ENCODE measurements at regions of chr15 and their contacts with region 1.

Region 1: GRCh38 chr15:52078876-52079700 is 33.5 kb downstream of the BCL2L10 start:
- DNase-seq: no peak
- ATAC-seq: peak; percentile 63
- H3K4me3 ChIP-seq: no peak overlapping the region
- H3K27ac ChIP-seq: peak overlapping the region; percentile 4; the same call in 1 of the 2 replicates
- H3K4me1 ChIP-seq: peaks cover 32% of the 10 kb centered on the region
- H3K27me3 ChIP-seq: no peaks in the 10 kb centered on the region
- CTCF ChIP-seq: peak; percentile 81 to 90 (median 88)
- EP300 ChIP-seq: no peak
- POLR2A ChIP-seq: no peak
- RAD21 ChIP-seq: peak; percentile 87

Region 2: GRCh38 chr15:51982013-51982769 is 96.9 kb before region 1 on chr15:
- CTCF ChIA-PET with region 1: interaction called, 49 read pairs
- POLR2A ChIA-PET with region 1: interaction called, 3 read pairs
- RAD21 ChIA-PET with region 1: interaction called, 18 read pairs
- SMC1A ChIA-PET with region 1: interaction called, 56 read pairs
- in situ Hi-C with region 1: no loop called
- intact Hi-C with region 1: loop called (anchors 1 kb)
- DNase-seq: peak; percentile 92
- ATAC-seq: peak; percentile 99
- H3K4me3 ChIP-seq: peak overlapping the region; percentile 61
- H3K27ac ChIP-seq: peak overlapping the region; percentile 73
- H3K4me1 ChIP-seq: no peaks in the 10 kb centered on the region
- H3K27me3 ChIP-seq: no peaks in the 10 kb centered on the region
- CTCF ChIP-seq: peak; percentile 60 to 88 (median 80)
- EP300 ChIP-seq: no peak
- POLR2A ChIP-seq: peak; percentile 69
- RAD21 ChIP-seq: peak; percentile 96

Region 3: GRCh38 chr15:52018693-52019387 is 60.2 kb before region 1 on chr15 and contains the start of gene MAPK6:
- CTCF ChIA-PET with region 1: interaction called, 12 read pairs
- POLR2A ChIA-PET with region 1: interaction called, 5 read pairs
- RAD21 ChIA-PET with region 1: interaction called, 28 read pairs
- SMC1A ChIA-PET with region 1: interaction called, 24 read pairs
- in situ Hi-C with region 1: no loop called
- intact Hi-C with region 1: no loop called
- DNase-seq: peak; percentile 71
- ATAC-seq: peak; percentile 69
- H3K4me3 ChIP-seq: peak within 1 kb of the TSS; percentile 91
- H3K27ac ChIP-seq: peak within 1 kb of the TSS; percentile 99
- H3K4me1 ChIP-seq: peaks cover 15% of the 10 kb centered on the region
- H3K27me3 ChIP-seq: no peaks in the 10 kb centered on the region
- CTCF ChIP-seq: no peak
- EP300 ChIP-seq: peak in 1 of 2 experiments; percentile 61; a peak in 1 of 4 replicates
- POLR2A ChIP-seq: peak; percentile 88
- RAD21 ChIP-seq: no peak
- polyA plus RNA-seq, gene MAPK6: 20.6 to 23.4 TPM

Region 4: DNA sequence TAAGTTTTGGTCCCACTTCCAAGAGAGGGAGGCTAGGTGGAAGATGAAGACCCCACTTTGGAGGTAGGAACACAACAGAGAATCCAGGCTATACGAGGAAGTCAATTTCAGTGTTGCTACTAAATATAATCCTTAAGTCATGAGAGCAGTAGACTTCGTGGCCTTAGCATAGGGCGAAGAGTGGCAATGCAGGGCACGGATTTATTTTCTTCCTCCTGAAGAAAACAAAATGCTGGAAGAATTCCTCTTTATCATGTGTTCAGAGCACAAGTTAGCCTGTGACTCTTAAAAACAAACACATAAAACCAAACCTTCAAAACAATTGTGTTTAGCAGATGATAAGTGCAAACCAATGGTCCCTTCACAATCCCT is 14.1 kb after region 1 on chr15:
- CTCF ChIA-PET with region 1: interaction called, 251 read pairs
- POLR2A ChIA-PET with region 1: interaction called, 151 read pairs
- RAD21 ChIA-PET with region 1: interaction called, 170 read pairs
- SMC1A ChIA-PET with region 1: interaction called, 272 read pairs
- in situ Hi-C with region 1: no loop called
- intact Hi-C with region 1: no loop called
- DNase-seq: no peak
- ATAC-seq: no peak
- H3K4me3 ChIP-seq: no peak overlapping the region
- H3K27ac ChIP-seq: no peak overlapping the region
- H3K4me1 ChIP-seq: no peaks in the 10 kb centered on the region; the same call in 1 of the 2 replicates
- H3K27me3 ChIP-seq: no peaks in the 10 kb centered on the region
- CTCF ChIP-seq: no peak
- EP300 ChIP-seq: no peak
- POLR2A ChIP-seq: no peak
- RAD21 ChIP-seq: no peak

Region 5: DNA sequence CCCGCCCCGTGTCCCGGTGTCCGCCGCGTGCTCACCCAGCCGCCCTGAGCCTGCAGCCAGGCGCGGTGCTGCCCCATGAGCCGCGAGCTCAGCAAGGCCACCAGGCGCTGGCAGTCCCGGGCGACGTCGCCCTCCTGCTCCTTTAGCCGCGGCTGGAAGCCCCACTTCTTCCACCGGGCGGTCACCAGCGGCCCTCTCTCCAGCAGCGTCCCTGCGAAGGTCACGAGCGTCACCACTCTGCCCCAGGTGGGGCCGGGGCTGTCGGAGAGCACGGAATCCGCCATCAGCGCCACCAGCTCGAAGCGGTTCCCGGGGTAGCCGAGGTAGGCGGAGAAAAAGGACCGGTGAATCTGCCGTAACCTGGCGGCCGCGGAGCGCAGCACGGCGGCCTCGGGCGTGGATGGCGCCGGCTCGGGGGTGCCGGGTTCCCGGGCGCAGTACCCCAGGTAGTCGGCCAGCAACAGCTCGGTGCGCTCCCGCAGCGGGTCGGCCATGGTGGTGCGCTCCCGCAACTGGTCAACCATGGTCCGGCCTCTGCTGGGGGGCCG is 33.2 kb after region 1 on chr15:
- CTCF ChIA-PET with region 1: interaction called, 251 read pairs
- POLR2A ChIA-PET with region 1: interaction called, 86 read pairs
- RAD21 ChIA-PET with region 1: interaction called, 203 read pairs
- SMC1A ChIA-PET with region 1: interaction called, 179 read pairs
- in situ Hi-C with region 1: no loop called
- intact Hi-C with region 1: loop called (anchors 5 kb)
- DNase-seq: no peak
- ATAC-seq: peak; percentile 15
- H3K4me3 ChIP-seq: peak overlapping the region; percentile 72; the same call in 1 of the 2 replicates
- H3K27ac ChIP-seq: peak overlapping the region; percentile 94
- H3K4me1 ChIP-seq: peaks cover 42% of the 10 kb centered on the region
- H3K27me3 ChIP-seq: no peaks in the 10 kb centered on the region
- CTCF ChIP-seq: peak in 1 of 3 experiments; percentile 15; a peak in 1 of 6 replicates
- EP300 ChIP-seq: no peak
- POLR2A ChIP-seq: peak; percentile 79
- RAD21 ChIP-seq: no peak

Region 6: GRCh38 chr15:52139599-52140491 is 60.8 kb after region 1 on chr15:
- CTCF ChIA-PET with region 1: interaction called, 132 read pairs
- POLR2A ChIA-PET with region 1: interaction called, 7 read pairs
- RAD21 ChIA-PET with region 1: interaction called, 59 read pairs
- SMC1A ChIA-PET with region 1: interaction called, 159 read pairs
- in situ Hi-C with region 1: no loop called
- intact Hi-C with region 1: loop called (anchors 2 kb)
- DNase-seq: peak; percentile 39
- ATAC-seq: peak; percentile 83
- H3K4me3 ChIP-seq: no peak overlapping the region
- H3K27ac ChIP-seq: peak overlapping the region; percentile 66
- H3K4me1 ChIP-seq: peaks cover 35% of the 10 kb centered on the region
- H3K27me3 ChIP-seq: no peaks in the 10 kb centered on the region
- CTCF ChIP-seq: peak; percentile 78 to 91 (median 86)
- EP300 ChIP-seq: no peak
- POLR2A ChIP-seq: no peak
- RAD21 ChIP-seq: peak; percentile 98